Activated CD4-positive, alpha-beta T cell treated with anti-CD3 and anti-CD28 coated beads, Interleukin-2, amount 10 ng/mL, durations not matched to agents 24 days and 14 days (primary cell): ENCODE measurements at regions of chr7 and their contacts with region 1.

Region 1: DNA sequence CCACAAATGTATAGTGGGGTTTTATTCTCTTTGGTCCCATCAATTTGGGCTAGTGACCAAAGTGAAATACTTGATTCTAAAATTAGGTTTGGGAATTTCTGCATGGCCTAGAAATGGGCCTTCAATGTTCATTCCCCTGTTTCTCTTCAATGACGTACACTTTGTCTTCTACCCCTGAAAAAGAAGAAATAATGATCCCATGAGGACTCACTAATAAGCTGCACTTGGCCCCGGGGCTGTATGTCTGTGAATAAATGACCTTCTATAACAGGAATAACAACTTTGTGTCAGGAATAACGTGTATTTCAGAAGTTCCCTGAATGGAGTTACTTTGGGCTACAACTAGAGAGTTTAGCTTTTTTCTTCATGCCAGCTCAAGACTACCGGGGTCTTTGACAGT is 20.2 kb downstream of the OR6B1 start:
- DNase-seq: no peak
- H3K4me3 Mint-ChIP-seq: no peak overlapping the region
- H3K27ac Mint-ChIP-seq: no peak overlapping the region
- H3K4me1 Mint-ChIP-seq: no peaks in the 10 kb centered on the region
- H3K27me3 Mint-ChIP-seq: peaks cover under 1% of the 10 kb centered on the region

Region 2: GRCh38 chr7:143988976-143989745 is 31.2 kb before region 1 on chr7:
- intact Hi-C with region 1: loop called (anchors 5 kb)
- DNase-seq: no peak
- H3K4me3 Mint-ChIP-seq: no peak overlapping the region
- H3K27ac Mint-ChIP-seq: no peak overlapping the region
- H3K4me1 Mint-ChIP-seq: peaks cover 10% of the 10 kb centered on the region
- H3K27me3 Mint-ChIP-seq: peaks cover 2% of the 10 kb centered on the region